SK-N-SH (cell line): ENCODE measurements at regions of chr7 and their contacts with region 1.

Region 1: DNA sequence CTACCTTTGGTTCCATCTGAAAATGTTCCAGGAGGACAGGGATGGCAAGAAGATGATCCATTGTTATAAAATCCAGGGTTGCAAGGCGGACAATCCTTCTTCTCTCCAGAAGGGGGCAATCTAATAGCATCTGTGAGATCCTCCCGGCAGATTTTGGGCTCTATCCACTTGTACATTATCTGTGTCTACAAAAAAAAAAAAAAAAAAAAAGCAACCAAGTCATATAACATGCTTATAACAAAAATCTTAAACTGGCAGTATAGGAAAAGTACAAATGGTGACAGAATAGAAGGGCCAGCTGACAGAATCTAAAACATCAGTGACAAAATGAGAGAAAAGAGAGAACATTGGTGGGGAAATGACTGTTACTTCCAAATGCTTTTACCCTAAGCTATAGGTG is 132.7 kb downstream of the ELAPOR2 start:
- DNase-seq: peak; percentile 53
- H3K4me3 ChIP-seq: no peak overlapping the region; a peak in 1 of 4 replicates
- H3K27ac ChIP-seq: no peak overlapping the region
- H3K4me1 ChIP-seq: peaks cover 3 to 5% of the 10 kb centered on the region in 2 experiments; a peak in 3 of 4 replicates
- H3K27me3 ChIP-seq: no peaks in the 10 kb centered on the region
- CTCF ChIP-seq: peak; percentile 96
- EP300 ChIP-seq: no peak
- RAD21 ChIP-seq: peak; percentile 92

Region 2: DNA sequence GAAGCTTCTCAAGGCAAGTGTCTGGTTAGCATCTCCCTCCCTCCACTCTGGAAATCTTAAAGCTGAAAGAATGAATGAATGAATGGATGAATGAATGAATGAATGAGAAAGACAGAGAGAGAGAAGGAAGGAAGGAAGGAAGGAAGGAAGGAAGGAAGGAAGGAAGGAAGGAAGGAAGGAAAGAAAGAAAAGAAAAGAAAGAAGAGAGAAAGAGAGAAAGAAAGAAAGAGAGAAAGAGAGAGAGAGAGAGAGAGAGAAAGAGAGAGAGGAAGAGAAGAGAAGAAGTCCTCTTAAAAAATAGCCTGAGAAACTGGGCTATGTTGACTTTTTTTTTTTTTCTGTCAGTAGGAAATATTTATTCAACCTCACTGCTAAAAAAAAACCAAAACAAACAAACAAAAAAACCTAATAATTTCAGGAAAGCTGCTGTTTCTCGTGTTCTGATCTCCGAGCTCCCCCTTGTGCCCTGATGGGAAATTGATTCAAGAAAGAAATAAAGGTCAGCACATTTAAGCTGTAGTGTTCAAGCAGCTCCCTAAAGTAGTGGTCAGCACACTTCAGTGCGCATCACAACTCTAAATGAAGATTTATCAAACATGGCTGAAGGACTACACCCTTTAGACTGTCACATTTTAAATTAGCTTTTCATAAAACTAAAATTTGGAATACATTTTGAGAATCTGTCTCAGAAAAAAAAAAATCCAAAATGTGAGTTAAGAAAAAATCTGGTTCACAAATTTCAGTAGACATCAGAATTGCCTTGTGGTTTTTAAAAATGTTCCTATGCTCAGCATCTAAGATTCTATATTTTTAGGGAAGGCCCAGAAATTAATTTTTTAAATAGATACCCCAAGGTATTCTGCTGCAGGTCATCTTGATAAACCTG is 21.5 kb before region 1 on chr7:
- CTCF ChIA-PET with region 1: interaction called, 13 read pairs
- POLR2A ChIA-PET with region 1: no interaction called
- DNase-seq: peak; percentile 15
- H3K4me3 ChIP-seq: no peak overlapping the region
- H3K27ac ChIP-seq: no peak overlapping the region
- H3K4me1 ChIP-seq: peaks cover 0 to 4% of the 10 kb centered on the region in 2 experiments; a peak in 2 of 4 replicates
- H3K27me3 ChIP-seq: no peaks in the 10 kb centered on the region
- CTCF ChIP-seq: peak; percentile 84
- EP300 ChIP-seq: no peak
- RAD21 ChIP-seq: peak; percentile 86

Region 3: GRCh38 chr7:86914551-86914950 is 12.2 kb before region 1 on chr7:
- CTCF ChIA-PET with region 1: interaction called, 45 read pairs
- POLR2A ChIA-PET with region 1: no interaction called
- DNase-seq: no peak
- H3K4me3 ChIP-seq: no peak overlapping the region; a peak in 1 of 4 replicates
- H3K27ac ChIP-seq: peak overlapping the region in 1 of 2 experiments; percentile 85; a peak in 3 of 4 replicates
- H3K4me1 ChIP-seq: peaks cover 11 to 17% of the 10 kb centered on the region in 2 experiments; a peak in 2 of 4 replicates
- H3K27me3 ChIP-seq: no peaks in the 10 kb centered on the region
- CTCF ChIP-seq: peak; percentile 94
- EP300 ChIP-seq: no peak
- RAD21 ChIP-seq: peak; percentile 52

Region 4: GRCh38 chr7:86939197-86939814 is 12.6 kb after region 1 on chr7:
- CTCF ChIA-PET with region 1: interaction called, 26 read pairs
- POLR2A ChIA-PET with region 1: no interaction called
- DNase-seq: peak; percentile 36
- H3K4me3 ChIP-seq: no peak overlapping the region
- H3K27ac ChIP-seq: no peak overlapping the region
- H3K4me1 ChIP-seq: peaks cover 0 to 11% of the 10 kb centered on the region in 2 experiments; a peak in 2 of 4 replicates
- H3K27me3 ChIP-seq: no peaks in the 10 kb centered on the region
- CTCF ChIP-seq: peak; percentile 91
- EP300 ChIP-seq: no peak
- RAD21 ChIP-seq: peak; percentile 83

Region 5: GRCh38 chr7:86989407-86989806 is 62.7 kb after region 1 on chr7:
- CTCF ChIA-PET with region 1: no interaction called
- POLR2A ChIA-PET with region 1: no interaction called
- DNase-seq: no peak
- H3K4me3 ChIP-seq: no peak overlapping the region
- H3K27ac ChIP-seq: no peak overlapping the region
- H3K4me1 ChIP-seq: no peaks in the 10 kb centered on the region; a peak in 1 of 4 replicates
- H3K27me3 ChIP-seq: no peaks in the 10 kb centered on the region
- CTCF ChIP-seq: no peak
- EP300 ChIP-seq: no peak
- RAD21 ChIP-seq: no peak

Region 6: DNA sequence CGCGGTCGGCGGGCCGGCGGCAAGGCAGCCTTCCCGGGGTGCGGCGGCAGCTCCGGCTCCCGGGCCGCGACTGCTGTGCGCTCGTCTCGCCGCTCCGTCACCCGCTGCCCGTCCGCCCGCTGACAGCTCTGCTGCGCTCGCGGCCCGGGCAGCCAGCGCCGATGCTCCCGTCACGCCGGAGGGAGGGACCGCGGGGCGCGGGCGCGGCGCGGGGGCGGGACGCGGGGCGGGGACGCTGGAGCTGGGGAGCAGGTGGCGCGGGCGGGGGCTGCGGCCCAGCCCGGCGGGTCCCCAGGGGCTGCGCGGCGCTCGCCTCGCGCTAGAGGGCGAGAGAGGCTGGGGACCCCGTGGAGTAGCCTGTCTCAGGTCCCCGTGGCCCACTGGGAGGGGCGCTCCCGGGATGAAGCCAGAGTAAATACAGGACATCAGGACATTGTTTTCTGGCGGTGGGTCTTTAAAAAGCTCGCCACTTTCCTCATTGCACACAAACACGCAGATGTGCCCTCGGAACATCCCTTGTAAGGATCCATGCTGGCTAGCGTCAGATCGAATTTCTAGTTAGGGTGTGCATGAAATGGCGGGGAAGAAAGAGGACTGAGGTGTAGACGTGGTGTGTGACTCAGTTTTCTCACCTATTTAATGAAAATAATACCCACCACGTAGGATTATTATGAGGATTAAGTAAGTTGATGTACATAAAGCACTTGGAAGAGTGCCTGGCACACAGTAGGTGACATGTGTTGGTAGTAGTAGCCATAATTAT is 133.0 kb after region 1 on chr7 and contains the start of gene ELAPOR2:
- CTCF ChIA-PET with region 1: interaction called, 15 read pairs
- POLR2A ChIA-PET with region 1: no interaction called
- DNase-seq: peak; percentile 98
- H3K4me3 ChIP-seq: peak within 1 kb of the TSS; percentile 81 to 90
- H3K27ac ChIP-seq: peak within 1 kb of the TSS in 1 of 2 experiments; percentile 87; a peak in 2 of 4 replicates
- H3K4me1 ChIP-seq: peaks cover 0 to 14% of the 10 kb centered on the region in 2 experiments; a peak in 2 of 4 replicates
- H3K27me3 ChIP-seq: no peaks in the 10 kb centered on the region
- CTCF ChIP-seq: peak; percentile 55
- EP300 ChIP-seq: peak in 1 of 2 experiments; percentile 29; a peak in 1 of 4 replicates
- RAD21 ChIP-seq: peak; percentile 64
- polyA plus RNA-seq, gene ELAPOR2: 8.8 and 15.9 TPM in 2 replicates

Region 7: DNA sequence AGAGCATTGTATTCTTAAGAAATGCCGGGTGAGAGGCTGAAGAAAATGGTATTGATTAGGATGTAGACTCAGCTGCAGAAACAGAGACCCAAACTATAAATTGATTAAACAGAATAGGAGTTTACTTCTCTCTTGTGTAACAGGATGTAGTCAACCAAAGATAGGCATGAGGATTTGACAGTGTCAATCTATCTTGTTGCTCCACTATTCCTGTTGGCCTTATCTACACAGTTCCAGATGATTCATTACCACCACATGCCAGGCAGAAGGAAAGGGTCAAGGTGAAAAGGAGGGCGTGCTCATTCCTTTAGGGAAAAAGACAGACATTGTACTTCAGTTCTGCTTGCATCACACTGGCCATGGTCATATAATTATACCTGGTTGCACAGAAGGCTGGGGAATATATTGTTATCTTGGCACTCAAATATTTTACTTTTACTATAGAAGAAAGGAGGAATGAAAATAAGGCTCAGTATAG is 213.6 kb after region 1 on chr7:
- CTCF ChIA-PET with region 1: interaction called, 295 read pairs
- POLR2A ChIA-PET with region 1: no interaction called
- DNase-seq: no peak
- H3K4me3 ChIP-seq: no peak overlapping the region
- H3K27ac ChIP-seq: no peak overlapping the region
- H3K4me1 ChIP-seq: no peaks in the 10 kb centered on the region
- H3K27me3 ChIP-seq: no peaks in the 10 kb centered on the region
- CTCF ChIP-seq: no peak
- EP300 ChIP-seq: no peak
- RAD21 ChIP-seq: no peak